ENCODE measurements at regions of chr2 and their contacts with region 1.

Region 1: GRCh38 chr2:234206738-234207137 is 156.2 kb downstream of the SPP2 start:
- DNase-seq: no peak
- H3K4me3 ChIP-seq: no peak overlapping the region
- CTCF ChIP-seq: no peak

Region 2: GRCh38 chr2:234245945-234246344 is 39.2 kb after region 1 on chr2:
- in situ Hi-C with region 1: loop called (anchors 5 kb)
- DNase-seq: peak; percentile 92
- H3K4me3 ChIP-seq: no peak overlapping the region
- CTCF ChIP-seq: no peak